ENCODE measurements at regions of chr7 and their contacts with region 1.

Region 1: DNA sequence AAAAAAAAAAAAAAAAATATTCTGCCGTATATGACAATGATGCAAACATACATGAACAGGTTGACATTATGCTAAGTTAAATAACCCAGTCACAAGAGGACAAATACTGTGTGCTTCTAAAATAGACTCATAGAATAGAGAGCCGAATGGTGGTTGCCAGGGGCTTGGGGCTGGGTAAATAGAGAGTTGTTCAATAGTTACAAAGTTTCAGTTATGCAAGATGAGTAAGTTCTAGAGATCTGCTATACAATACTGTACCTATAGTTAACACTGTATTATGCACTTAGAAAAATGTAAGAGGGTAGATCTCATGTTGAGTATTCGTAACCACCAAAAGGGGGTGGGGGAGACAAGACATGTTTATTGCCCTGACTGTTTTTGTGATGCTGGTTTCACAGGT is 77.1 kb upstream of the GNAI1 start:
- DNase-seq: no peak
- ATAC-seq: no peak
- H3K4me3 ChIP-seq: no peak overlapping the region
- H3K27ac ChIP-seq: no peak overlapping the region
- H3K4me1 ChIP-seq: no peaks in the 10 kb centered on the region
- H3K27me3 ChIP-seq: no peaks in the 10 kb centered on the region
- CTCF ChIP-seq: no peak
- POLR2A ChIP-seq: no peak

Region 2: GRCh38 chr7:80459776-80460510 is 402.5 kb after region 1 on chr7:
- intact Hi-C with region 1: loop called in 1 of 2 experiments (anchors 5 kb)
- DNase-seq: no peak
- ATAC-seq: no peak
- H3K4me3 ChIP-seq: no peak overlapping the region
- H3K27ac ChIP-seq: peak overlapping the region in 1 of 3 donors; percentile 55
- H3K4me1 ChIP-seq: no peaks in the 10 kb centered on the region
- H3K27me3 ChIP-seq: no peaks in the 10 kb centered on the region
- CTCF ChIP-seq: no peak
- POLR2A ChIP-seq: no peak